ENCODE measurements at regions of chr17 and their contacts with region 1.

Region 1: DNA sequence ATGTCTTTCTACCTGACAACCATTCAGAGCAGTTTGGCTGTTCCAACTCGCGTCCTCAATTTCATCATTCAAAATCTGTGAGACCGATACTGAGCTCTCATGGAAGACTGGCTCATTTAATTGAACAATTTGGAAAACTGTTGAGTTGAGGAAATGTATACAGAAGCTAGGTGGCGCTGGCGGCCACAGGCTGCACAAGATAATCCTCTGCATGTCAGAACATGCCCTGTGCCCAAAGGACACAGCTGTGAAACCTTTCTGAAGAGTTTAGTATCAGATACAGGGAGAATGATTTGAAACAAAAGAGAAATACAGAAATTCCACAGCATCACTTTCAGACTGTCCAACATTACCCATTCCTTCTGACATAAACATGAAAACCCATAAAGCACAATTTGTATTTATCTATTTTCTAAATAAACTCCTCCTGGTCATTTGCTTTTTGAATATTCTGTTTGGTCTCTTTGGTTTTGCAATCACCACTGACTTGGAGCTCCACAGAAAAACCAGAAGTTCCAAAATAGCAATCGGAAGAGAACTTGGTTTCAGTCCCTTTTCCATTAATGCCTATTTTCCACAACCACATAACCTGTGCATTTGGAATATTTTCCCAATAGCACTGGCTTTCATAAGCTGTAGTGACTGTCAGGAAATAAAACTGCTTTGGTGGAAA is 192.8 kb downstream of the MAP2K6 start:
- DNase-seq: peak; percentile 57 to 87 (median 72)
- ATAC-seq: peak; percentile 93 to 97 (median 95)
- H3K4me3 ChIP-seq: no peak overlapping the region
- H3K27ac ChIP-seq: peak overlapping the region in 1 of 4 donors; percentile 1
- H3K4me1 ChIP-seq: peaks cover 3 to 12% (median 9%) of the 10 kb centered on the region in 3 donors
- H3K27me3 ChIP-seq: no peaks in the 10 kb centered on the region
- CTCF ChIP-seq: peak; percentile 58 to 82 (median 70)

Region 2: GRCh38 chr17:70144260-70144846 is 537.1 kb after region 1 on chr17:
- intact Hi-C with region 1: loop called in 1 of 3 experiments (anchors 5 kb)
- DNase-seq: no peak
- ATAC-seq: peak in 3 of 4 donors; percentile 60 to 68 (median 63)
- H3K4me3 ChIP-seq: no peak overlapping the region
- H3K27ac ChIP-seq: no peak overlapping the region
- H3K4me1 ChIP-seq: peaks cover 0 to 2% (median 0%) of the 10 kb centered on the region in 3 donors
- H3K27me3 ChIP-seq: no peaks in the 10 kb centered on the region
- CTCF ChIP-seq: peak in 3 of 4 donors; percentile 32 to 55 (median 53)